HEK293 (cell line): ENCODE measurements at regions of chr21 and their contacts with region 1.

Region 1: GRCh38 chr21:44338971-44339910 is at the start of gene CFAP410:
- H3K4me3 ChIP-seq: peak within 1 kb of the TSS; percentile 93
- H3K27ac ChIP-seq: peak within 1 kb of the TSS; percentile 93
- H3K4me1 ChIP-seq: peaks cover 9% of the 10 kb centered on the region
- CTCF ChIP-seq: 0 out of 2 replicates have a peak, but pooled peaks have one; percentile 27

Region 2: DNA sequence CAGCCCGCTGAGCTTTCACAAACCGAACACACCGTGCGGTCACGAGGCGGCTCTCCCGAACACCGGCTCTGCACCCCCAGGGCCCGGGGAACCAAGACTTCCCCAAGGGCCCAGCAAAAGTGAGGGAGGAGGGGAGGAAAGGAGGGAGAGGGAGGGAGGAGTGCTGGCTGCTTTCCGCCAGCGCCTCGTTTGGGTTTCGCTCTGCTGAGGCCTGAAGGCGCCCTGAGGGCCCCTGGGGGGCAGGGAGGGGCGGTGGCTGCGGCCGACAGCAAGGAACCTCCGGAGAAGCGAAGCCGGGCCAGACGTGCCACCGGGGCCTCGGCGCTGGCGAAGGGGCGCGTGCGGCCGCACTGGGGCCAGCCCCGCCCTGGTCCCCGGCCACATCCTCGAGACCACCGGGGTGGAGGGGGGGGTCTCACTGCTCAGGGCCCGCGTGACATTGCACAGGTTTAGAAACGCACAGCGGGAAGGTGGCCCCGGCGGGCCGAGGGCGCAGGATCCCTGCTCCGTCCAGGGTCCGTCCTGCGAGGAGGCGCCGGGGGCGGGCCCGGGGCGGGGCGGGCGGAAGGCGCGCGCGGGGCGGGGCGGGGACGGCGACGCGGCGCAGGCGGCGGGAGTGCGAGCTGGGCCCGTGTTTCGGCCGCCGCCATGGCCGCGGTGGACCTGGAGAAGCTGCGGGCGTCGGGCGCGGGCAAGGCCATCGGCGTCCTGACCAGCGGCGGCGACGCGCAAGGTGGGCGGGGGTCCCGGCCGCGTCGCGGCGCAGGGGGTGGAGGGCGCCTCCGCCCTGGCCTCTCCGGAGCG is 39.6 kb before region 1 on chr21 and contains the start of gene PFKL:
- CTCF ChIA-PET with region 1: interaction called, 11 read pairs
- POLR2A ChIA-PET with region 1: interaction called, 3 read pairs
- H3K4me3 ChIP-seq: peak within 1 kb of the TSS; percentile 64
- H3K27ac ChIP-seq: peak within 1 kb of the TSS; percentile 81
- H3K4me1 ChIP-seq: peaks cover 8% of the 10 kb centered on the region; the same call in 1 of the 2 replicates
- CTCF ChIP-seq: peak; percentile 20; the same call in 1 of the 2 replicates

Region 3: DNA sequence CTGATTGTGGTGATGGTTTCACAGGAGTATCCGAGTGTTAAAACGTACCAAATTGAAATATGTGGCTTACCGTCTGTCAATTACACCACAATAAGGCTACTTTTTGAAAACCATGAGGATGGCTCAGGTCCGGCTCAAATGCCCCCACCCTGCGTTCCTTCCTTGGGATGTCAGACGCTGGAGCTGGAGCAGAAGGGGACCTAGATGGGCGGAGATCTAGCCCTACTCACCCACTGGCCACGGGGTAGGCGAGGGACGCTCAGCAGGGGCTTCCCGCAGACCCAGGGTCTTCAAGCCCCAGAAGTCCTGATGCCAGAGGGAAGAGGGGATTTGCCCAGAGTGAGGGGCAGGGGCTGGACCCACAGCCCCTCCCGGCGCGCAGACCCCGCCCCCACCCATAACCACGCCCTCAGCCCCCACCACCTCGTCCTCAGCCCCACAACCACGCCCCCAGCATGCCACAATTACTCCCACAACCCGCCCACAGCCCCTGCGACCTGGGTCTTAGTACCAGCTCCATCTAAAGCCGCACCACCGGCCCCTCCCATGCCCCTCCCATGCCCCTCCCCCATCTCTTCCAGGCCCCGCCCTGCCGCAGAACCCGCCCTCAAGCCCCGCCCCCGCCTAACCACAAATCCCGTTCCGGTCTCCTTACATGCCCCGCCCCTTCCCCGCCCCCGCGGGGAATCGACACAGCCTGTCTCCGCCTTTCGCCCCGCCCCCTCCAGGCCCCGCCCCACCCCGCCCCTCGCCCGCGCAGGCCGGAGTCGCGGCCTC is 115.7 kb after region 1 on chr21 and contains the start of gene LRRC3:
- CTCF ChIA-PET with region 1: interaction called, 3 read pairs
- POLR2A ChIA-PET with region 1: interaction called, 11 read pairs
- H3K4me3 ChIP-seq: peak within 1 kb of the TSS; percentile 50
- H3K27ac ChIP-seq: no peak within 1 kb of the TSS
- H3K4me1 ChIP-seq: no peaks in the 10 kb centered on the region
- CTCF ChIP-seq: no peak